ENCODE measurements at regions of chr1 and their contacts with region 1.

Region 1: GRCh38 chr1:55021965-55022546 is 17.3 kb upstream of the PCSK9 start:
- DNase-seq: peak; percentile 74
- ATAC-seq: peak; percentile 99
- H3K4me3 ChIP-seq: peak overlapping the region in 1 of 3 experiments; percentile 44; a peak in 2 of 6 replicates
- H3K27ac ChIP-seq: no peak overlapping the region
- H3K4me1 ChIP-seq: peaks cover 11% of the 10 kb centered on the region
- H3K27me3 ChIP-seq: peaks cover 0 to 10% of the 10 kb centered on the region in 2 experiments; a peak in 2 of 5 replicates
- CTCF ChIP-seq: peak; percentile 99
- EP300 ChIP-seq: no peak
- POLR2A ChIP-seq: 0 out of 4 replicates have a peak, but pooled peaks of 1 of the 2 experiments have one; percentile 18
- RAD21 ChIP-seq: peak; percentile 93

Region 2: DNA sequence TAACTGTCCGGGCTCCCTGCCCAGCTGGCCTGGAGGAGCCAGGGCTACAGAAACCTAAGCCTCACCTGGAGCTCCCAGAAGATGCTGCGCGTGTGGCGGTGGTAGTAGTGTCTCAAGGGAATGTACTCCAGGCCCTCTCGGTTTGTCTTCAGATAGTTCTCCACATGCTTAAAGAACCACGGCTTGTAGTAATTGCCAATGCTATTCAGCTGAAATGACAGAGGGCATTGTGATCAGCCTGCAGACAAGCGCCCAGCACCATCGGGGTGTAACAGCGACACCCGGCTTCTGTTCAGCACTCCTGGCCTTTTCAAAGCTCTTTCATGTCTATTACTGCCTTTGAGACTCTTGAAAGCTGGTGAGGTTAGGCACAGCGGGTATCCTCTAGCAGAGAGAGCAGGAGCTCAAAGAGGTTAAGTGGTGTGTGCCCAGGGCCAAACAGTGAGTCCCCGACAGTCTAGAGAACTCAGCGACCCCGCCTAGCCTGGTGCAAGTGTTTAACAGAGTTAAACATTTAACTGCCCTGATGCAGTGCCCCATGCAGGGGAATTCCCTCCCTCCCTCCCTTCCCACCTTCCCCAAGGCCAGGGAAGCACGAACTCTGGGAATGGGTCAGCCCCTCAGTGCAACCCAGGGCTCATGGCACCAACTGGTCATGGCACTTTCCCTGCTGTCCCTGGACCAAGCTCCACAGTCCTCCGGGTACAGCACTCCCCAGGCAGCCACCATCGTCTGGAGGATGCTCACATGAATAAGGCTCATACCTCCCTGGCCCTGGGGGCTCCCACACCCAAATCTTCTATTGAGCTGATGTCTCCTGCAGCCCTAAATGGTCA is 156.6 kb before region 1 on chr1:
- CTCF ChIA-PET with region 1: no interaction called
- POLR2A ChIA-PET with region 1: no interaction called
- in situ Hi-C with region 1: no loop called
- intact Hi-C with region 1: loop called (anchors 5 kb)
- DNase-seq: peak; percentile 89
- ATAC-seq: peak; percentile 55
- H3K4me3 ChIP-seq: peak overlapping the region; percentile 47 to 59 (median 55); a peak in 5 of 6 replicates
- H3K27ac ChIP-seq: peak overlapping the region; percentile 90
- H3K4me1 ChIP-seq: peaks cover 100% of the 10 kb centered on the region
- H3K27me3 ChIP-seq: no peaks in the 10 kb centered on the region
- CTCF ChIP-seq: 0 out of 2 replicates have a peak, but pooled peaks have one; percentile 8
- EP300 ChIP-seq: peak in 1 of 2 experiments; percentile 63; a peak in 1 of 4 replicates
- POLR2A ChIP-seq: peak; percentile 56 to 57
- RAD21 ChIP-seq: 0 out of 2 replicates have a peak, but pooled peaks have one; percentile 14

Region 3: DNA sequence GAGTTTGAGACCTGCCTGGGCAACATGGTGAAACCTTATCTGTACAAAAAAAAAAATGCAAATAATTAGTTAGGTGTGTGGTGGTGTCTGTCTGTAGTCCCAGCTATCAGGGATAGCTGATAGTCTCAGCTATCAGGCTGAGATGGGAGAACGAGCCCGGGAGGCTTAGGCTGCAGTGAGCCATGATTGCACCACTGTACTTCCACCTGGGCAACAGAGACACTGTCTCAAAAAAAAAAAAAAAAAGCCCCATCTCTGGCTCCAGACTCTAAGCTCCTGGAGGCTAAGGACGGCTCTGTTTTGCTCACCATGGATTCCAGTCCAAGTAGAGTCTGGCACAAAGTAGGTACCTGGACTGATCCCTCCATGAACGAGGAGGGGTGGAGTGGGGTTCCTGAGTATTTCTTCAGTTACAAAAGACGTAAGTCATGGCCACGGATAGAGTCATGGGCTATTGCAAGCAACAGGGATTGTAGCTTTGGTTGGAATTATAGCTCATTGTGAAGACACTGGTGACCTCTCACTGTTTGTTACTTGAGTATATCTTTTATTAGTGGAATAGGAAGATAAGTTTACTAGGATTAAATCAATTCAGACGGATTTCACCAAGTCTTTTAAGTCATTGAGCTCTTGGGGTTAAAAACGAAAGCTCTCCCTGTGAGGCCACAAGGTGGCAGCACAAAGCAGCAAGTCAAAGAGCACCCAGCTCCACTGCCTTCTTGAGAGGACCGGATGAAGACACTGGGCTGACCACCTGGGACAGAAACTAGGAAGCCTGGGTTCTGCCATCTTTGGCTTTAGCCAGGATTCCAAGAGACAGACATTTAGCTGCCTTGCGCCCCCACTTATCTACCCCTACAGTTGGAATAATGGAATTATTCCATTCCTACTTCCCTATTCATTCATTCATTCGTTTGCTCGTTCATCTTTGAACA is 77.2 kb before region 1 on chr1:
- CTCF ChIA-PET with region 1: interaction called, 17 read pairs
- POLR2A ChIA-PET with region 1: interaction called, 5 read pairs
- in situ Hi-C with region 1: no loop called
- intact Hi-C with region 1: loop called (anchors 1 kb)
- DNase-seq: peak; percentile 70
- ATAC-seq: peak; percentile 82
- H3K4me3 ChIP-seq: peak overlapping the region; percentile 7 to 65 (median 56); a peak in 4 of 6 replicates
- H3K27ac ChIP-seq: no peak overlapping the region
- H3K4me1 ChIP-seq: peaks cover 21% of the 10 kb centered on the region
- H3K27me3 ChIP-seq: no peaks in the 10 kb centered on the region; a peak in 1 of 5 replicates
- CTCF ChIP-seq: peak; percentile 81
- EP300 ChIP-seq: no peak
- POLR2A ChIP-seq: no peak
- RAD21 ChIP-seq: peak; percentile 67

Region 4: DNA sequence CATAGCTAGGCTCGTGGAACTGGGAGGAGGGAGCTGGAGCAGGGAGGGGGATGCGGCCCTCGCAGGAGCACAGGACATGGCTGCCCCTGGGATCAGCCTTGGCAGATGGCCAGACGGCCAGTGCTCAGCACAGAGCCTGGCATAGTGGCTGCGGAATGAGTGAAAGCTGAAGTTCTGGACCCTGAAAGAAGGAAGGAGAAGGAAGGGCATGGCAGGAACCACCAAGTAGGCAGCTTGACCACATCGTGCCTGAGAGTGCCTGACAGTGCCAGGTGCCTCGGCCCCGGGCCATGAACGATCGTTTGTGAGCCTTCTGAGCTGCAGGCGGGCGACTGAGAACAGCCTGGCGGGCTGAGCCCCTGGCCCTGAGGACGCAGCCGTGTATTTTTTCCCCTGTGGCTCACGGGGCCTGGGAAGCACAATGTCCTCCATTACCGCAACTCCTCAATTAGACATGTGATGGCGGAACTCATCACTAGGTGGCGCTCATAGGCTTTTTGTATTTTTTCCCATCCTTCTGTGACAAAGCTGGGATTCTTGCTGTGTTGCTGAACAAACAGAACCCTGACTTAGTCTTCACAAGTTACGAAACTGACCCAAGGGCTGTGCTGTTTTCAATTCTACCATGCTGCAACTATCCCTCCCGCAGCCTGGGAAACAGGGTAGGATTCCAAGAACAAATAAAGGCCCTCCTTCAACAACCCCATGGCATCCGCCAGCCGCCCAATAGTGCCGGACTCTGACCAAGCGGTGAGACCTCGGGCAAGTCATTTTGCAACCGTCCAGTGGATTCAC is 71.5 kb before region 1 on chr1:
- CTCF ChIA-PET with region 1: interaction called, 17 read pairs
- POLR2A ChIA-PET with region 1: interaction called, 5 read pairs
- in situ Hi-C with region 1: no loop called
- intact Hi-C with region 1: loop called (anchors 1 kb)
- DNase-seq: peak; percentile 84
- ATAC-seq: peak; percentile 83
- H3K4me3 ChIP-seq: peak overlapping the region; percentile 33 to 70 (median 58); a peak in 5 of 6 replicates
- H3K27ac ChIP-seq: peak overlapping the region; percentile 13
- H3K4me1 ChIP-seq: peaks cover 43% of the 10 kb centered on the region
- H3K27me3 ChIP-seq: no peaks in the 10 kb centered on the region; a peak in 1 of 5 replicates
- CTCF ChIP-seq: peak; percentile 91
- EP300 ChIP-seq: no peak
- POLR2A ChIP-seq: no peak
- RAD21 ChIP-seq: peak; percentile 68

Region 5: GRCh38 chr1:54973205-54973921 is 48.7 kb before region 1 on chr1:
- CTCF ChIA-PET with region 1: no interaction called
- POLR2A ChIA-PET with region 1: no interaction called
- in situ Hi-C with region 1: no loop called
- intact Hi-C with region 1: loop called (anchors 1 kb)
- DNase-seq: peak; percentile 40
- ATAC-seq: peak; percentile 90
- H3K4me3 ChIP-seq: no peak overlapping the region
- H3K27ac ChIP-seq: no peak overlapping the region
- H3K4me1 ChIP-seq: no peaks in the 10 kb centered on the region
- H3K27me3 ChIP-seq: peaks cover 0 to 23% of the 10 kb centered on the region in 2 experiments; a peak in 3 of 5 replicates
- CTCF ChIP-seq: peak; percentile 73
- EP300 ChIP-seq: no peak
- POLR2A ChIP-seq: no peak
- RAD21 ChIP-seq: peak; percentile 9; the same call in 1 of the 2 replicates

Measured in HepG2 (cell line).